ENCODE measurements at regions of chr9 and their contacts with region 1.

Region 1: GRCh38 chr9:89732295-89732938 is 127.6 kb downstream of the GADD45G start:
- DNase-seq: no peak
- H3K4me3 ChIP-seq: no peak overlapping the region
- H3K27ac ChIP-seq: no peak overlapping the region
- H3K4me1 ChIP-seq: no peaks in the 10 kb centered on the region; a peak in 1 of 7 replicates
- H3K27me3 ChIP-seq: 0 out of 7 replicates have a peak, but pooled peaks cover 0 to 3% (median 0%) of the 10 kb centered on the region in 4 experiments
- CTCF ChIP-seq: no peak
- EP300 ChIP-seq: no peak
- POLR2A ChIP-seq: no peak
- RAD21 ChIP-seq: no peak

Region 2: DNA sequence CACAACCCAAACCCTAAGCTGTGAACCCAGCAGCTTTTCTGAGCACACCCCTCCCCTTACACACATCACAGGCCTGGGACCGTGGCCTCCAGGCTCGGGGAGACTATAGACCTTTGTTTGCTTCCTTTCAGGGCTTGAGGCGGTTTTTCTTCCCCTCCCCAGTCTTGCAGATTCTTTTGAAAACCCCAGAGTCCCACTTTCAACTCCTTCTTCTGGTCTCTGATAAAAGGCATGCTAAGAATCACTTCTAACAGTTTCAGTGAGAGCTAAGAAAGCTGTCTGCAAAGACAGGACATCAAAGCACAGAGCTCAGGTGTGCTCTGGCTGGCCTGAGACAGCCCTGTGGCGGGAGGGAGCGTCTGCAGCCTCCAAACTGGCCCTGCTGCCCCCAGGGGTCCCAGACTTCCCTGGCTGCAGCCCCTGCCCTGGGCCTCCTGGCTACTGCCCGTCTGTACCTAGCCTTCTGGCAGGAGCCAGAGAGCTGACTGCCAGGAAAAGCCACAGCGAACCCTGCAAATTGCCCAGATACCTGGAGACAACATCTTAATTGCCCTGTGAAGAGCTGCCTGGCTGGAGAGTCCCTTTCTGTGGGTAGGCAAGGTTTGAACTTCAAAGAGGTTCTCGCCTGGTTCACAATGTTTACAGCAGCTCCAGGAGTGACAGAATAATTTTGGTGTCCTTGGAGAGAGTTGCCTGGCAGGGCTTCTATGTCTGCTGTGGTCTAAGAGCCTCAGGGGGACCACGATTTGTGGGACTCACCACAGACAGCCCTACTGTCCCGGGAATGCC is 11.3 kb after region 1 on chr9:
- CTCF ChIA-PET with region 1: interaction called, 15 read pairs
- POLR2A ChIA-PET with region 1: interaction called, 4 read pairs
- DNase-seq: peak; percentile 9 to 61
- H3K4me3 ChIP-seq: no peak overlapping the region
- H3K27ac ChIP-seq: no peak overlapping the region
- H3K4me1 ChIP-seq: peaks cover 0 to 9% (median under 1%) of the 10 kb centered on the region in 4 experiments; a peak in 4 of 7 replicates
- H3K27me3 ChIP-seq: no peaks in the 10 kb centered on the region
- CTCF ChIP-seq: peak; percentile 24 to 41 (median 34); a peak in 3 of 4 replicates
- EP300 ChIP-seq: no peak
- POLR2A ChIP-seq: no peak
- RAD21 ChIP-seq: peak; percentile 27 to 45; a peak in 2 of 4 replicates